CD14-positive monocyte (primary cell): ENCODE measurements at regions of chr19 and their contacts with region 1.

Region 1: GRCh38 chr19:15629003-15629880 is 11.5 kb upstream of the CYP4F3 start:
- DNase-seq: peak; percentile 61 to 75 (median 62)
- H3K4me3 ChIP-seq: no peak overlapping the region
- H3K4me3 Mint-ChIP-seq: no peak overlapping the region
- H3K27ac ChIP-seq: no peak overlapping the region
- H3K27ac Mint-ChIP-seq: peak overlapping the region in 1 of 7 donors; percentile 64
- H3K4me1 ChIP-seq: peaks cover 21 to 22% of the 10 kb centered on the region in 2 donors
- H3K4me1 Mint-ChIP-seq: peaks cover 23% of the 10 kb centered on the region
- H3K27me3 ChIP-seq: no peaks in the 10 kb centered on the region
- H3K27me3 Mint-ChIP-seq: peaks cover 0 to 8% (median 8%) of the 10 kb centered on the region in 3 donors
- CTCF ChIP-seq: peak; percentile 99

Region 2: GRCh38 chr19:15869109-15869555 is 239.9 kb after region 1 on chr19:
- intact Hi-C with region 1: loop called in 1 of 2 experiments (anchors 5 kb)
- DNase-seq: peak; percentile 21 to 43 (median 41)
- H3K4me3 ChIP-seq: no peak overlapping the region
- H3K4me3 Mint-ChIP-seq: no peak overlapping the region
- H3K27ac ChIP-seq: no peak overlapping the region
- H3K27ac Mint-ChIP-seq: peak overlapping the region in 2 of 7 donors; percentile 6 to 75
- H3K4me1 ChIP-seq: peaks cover 29 to 34% of the 10 kb centered on the region in 2 donors
- H3K4me1 Mint-ChIP-seq: peaks cover 57% of the 10 kb centered on the region
- H3K27me3 ChIP-seq: no peaks in the 10 kb centered on the region
- H3K27me3 Mint-ChIP-seq: no peaks in the 10 kb centered on the region
- CTCF ChIP-seq: peak; percentile 62

Region 3: GRCh38 chr19:16417660-16418596 is 788.7 kb after region 1 on chr19:
- intact Hi-C with region 1: loop called in 1 of 2 experiments (anchors 10 kb)
- DNase-seq: peak; percentile 49 to 61 (median 57)
- H3K4me3 ChIP-seq: no peak overlapping the region
- H3K4me3 Mint-ChIP-seq: no peak overlapping the region
- H3K27ac ChIP-seq: peak overlapping the region in 1 of 2 donors; percentile 20
- H3K27ac Mint-ChIP-seq: peak overlapping the region in 6 of 7 donors; percentile 18 to 80 (median 35)
- H3K4me1 ChIP-seq: peaks cover 0 to 4% of the 10 kb centered on the region in 2 donors
- H3K4me1 Mint-ChIP-seq: peaks cover 10% of the 10 kb centered on the region
- H3K27me3 ChIP-seq: no peaks in the 10 kb centered on the region
- H3K27me3 Mint-ChIP-seq: peaks cover 0 to 2% (median 0%) of the 10 kb centered on the region in 3 donors
- CTCF ChIP-seq: peak; percentile 94